OCI-LY7 (cell line): ENCODE measurements at regions of chr18 and their contacts with region 1.

Region 1: GRCh38 chr18:51197661-51198424 is at the start of gene MEX3C:
- DNase-seq: peak; percentile 95
- H3K4me3 ChIP-seq: peak within 1 kb of the TSS; percentile 92
- H3K27ac ChIP-seq: peak within 1 kb of the TSS; percentile 91
- H3K4me1 ChIP-seq: peaks cover 4% of the 10 kb centered on the region
- CTCF ChIP-seq: 0 out of 2 replicates have a peak, but pooled peaks have one; percentile 13
- total RNA-seq, gene MEX3C: 41.9 and 48.9 TPM in 2 replicates

Region 2: GRCh38 chr18:50878345-50879301 is 319.2 kb before region 1 on chr18 and contains the start of gene ME2:
- CTCF ChIA-PET with region 1: no interaction called
- POLR2A ChIA-PET with region 1: no interaction called
- intact Hi-C with region 1: loop called (anchors 10 kb)
- DNase-seq: peak; percentile 84
- H3K4me3 ChIP-seq: peak within 1 kb of the TSS; percentile 89
- H3K27ac ChIP-seq: peak within 1 kb of the TSS; percentile 76
- H3K4me1 ChIP-seq: peaks cover 12% of the 10 kb centered on the region
- CTCF ChIP-seq: no peak
- total RNA-seq, gene ME2: 39.0 and 43.2 TPM in 2 replicates

Region 3: GRCh38 chr18:51029694-51030536 is 167.9 kb before region 1 on chr18 and contains the start of gene SMAD4:
- CTCF ChIA-PET with region 1: no interaction called
- POLR2A ChIA-PET with region 1: no interaction called
- intact Hi-C with region 1: loop called (anchors 10 kb)
- DNase-seq: peak; percentile 85
- H3K4me3 ChIP-seq: peak within 1 kb of the TSS; percentile 87
- H3K27ac ChIP-seq: peak within 1 kb of the TSS; percentile 57
- H3K4me1 ChIP-seq: peaks cover 14% of the 10 kb centered on the region
- CTCF ChIP-seq: no peak
- total RNA-seq, gene SMAD4: 28.1 and 44.7 TPM in 2 replicates

Region 4: GRCh38 chr18:51110073-51110803 is 87.6 kb before region 1 on chr18:
- CTCF ChIA-PET with region 1: no interaction called
- POLR2A ChIA-PET with region 1: no interaction called
- intact Hi-C with region 1: loop called (anchors 10 kb)
- DNase-seq: peak; percentile 49
- H3K4me3 ChIP-seq: no peak overlapping the region
- H3K27ac ChIP-seq: no peak overlapping the region
- H3K4me1 ChIP-seq: peaks cover 9% of the 10 kb centered on the region
- CTCF ChIP-seq: peak; percentile 69

Region 5: DNA sequence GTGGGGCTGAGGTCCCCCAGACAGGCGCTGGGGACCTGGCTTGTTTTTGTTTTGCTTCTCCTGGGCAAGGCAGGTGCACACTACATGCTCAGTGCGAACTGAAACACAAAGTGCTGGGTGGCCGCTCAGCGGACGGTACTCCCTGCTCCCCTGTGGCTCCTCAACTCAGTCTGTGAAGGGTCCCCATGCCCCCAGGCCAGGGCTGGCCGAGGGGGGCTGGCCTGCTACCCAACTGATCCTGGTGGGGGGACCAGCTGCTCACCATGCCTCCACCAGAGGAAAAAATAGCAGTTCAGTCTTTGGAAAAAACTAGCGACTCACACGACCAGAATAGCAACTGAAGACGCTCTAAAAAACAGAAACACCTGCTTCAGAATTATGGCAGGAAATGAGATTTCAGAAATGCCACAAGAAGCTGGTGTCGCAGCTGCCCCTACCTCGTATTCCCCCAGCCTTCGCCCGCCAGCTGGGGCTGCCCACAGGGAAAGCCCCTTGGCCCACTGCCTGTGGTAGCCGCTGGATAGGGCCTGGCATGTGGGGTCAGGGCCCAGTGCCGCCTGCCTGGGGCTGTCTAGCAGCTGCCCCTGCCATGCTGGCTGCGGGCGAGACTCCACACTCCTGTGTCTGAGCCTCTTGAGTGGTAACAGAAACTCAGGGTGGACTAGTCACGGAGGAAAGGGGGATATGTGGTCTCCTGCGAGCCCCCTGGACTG is 44.0 kb before region 1 on chr18:
- CTCF ChIA-PET with region 1: no interaction called
- POLR2A ChIA-PET with region 1: interaction called, 50 read pairs
- intact Hi-C with region 1: loop called (anchors 1 kb)
- DNase-seq: peak; percentile 87
- H3K4me3 ChIP-seq: peak overlapping the region; percentile 59
- H3K27ac ChIP-seq: peak overlapping the region; percentile 100
- H3K4me1 ChIP-seq: peaks cover 62% of the 10 kb centered on the region
- CTCF ChIP-seq: no peak

Region 6: DNA sequence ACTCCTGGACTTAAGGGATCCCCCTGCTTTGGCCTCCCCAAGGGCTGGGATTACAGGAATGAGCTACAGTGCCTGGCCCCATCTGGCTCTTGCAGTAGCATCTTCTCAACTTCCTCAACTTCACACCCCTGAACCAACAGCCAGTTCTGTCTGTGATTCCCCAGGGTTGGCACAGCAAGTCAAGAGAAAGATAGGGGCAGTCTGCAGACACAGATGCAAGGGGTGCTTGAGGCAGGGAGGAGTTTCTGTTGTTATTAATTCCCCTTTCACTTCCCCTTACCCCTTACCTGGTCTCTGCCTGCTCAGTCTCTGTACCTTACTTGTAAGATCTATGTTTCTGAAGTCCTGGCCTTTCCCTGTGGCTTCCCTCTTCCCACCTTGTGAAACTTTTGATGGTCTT is 53.8 kb after region 1 on chr18:
- CTCF ChIA-PET with region 1: no interaction called
- POLR2A ChIA-PET with region 1: no interaction called
- intact Hi-C with region 1: loop called (anchors 1 kb)
- DNase-seq: peak; percentile 86
- H3K4me3 ChIP-seq: no peak overlapping the region
- H3K27ac ChIP-seq: peak overlapping the region; percentile 75
- H3K4me1 ChIP-seq: peaks cover 23% of the 10 kb centered on the region
- CTCF ChIP-seq: no peak

Region 7: GRCh38 chr18:51300912-51301311 is 103.1 kb after region 1 on chr18:
- CTCF ChIA-PET with region 1: no interaction called
- POLR2A ChIA-PET with region 1: no interaction called
- intact Hi-C with region 1: loop called (anchors 5 kb)
- DNase-seq: no peak
- H3K4me3 ChIP-seq: no peak overlapping the region
- H3K27ac ChIP-seq: peak overlapping the region; percentile 28
- H3K4me1 ChIP-seq: peaks cover 6% of the 10 kb centered on the region
- CTCF ChIP-seq: no peak